BJ (cell line): ENCODE measurements at regions of chr1 and their contacts with region 1.

Region 1: DNA sequence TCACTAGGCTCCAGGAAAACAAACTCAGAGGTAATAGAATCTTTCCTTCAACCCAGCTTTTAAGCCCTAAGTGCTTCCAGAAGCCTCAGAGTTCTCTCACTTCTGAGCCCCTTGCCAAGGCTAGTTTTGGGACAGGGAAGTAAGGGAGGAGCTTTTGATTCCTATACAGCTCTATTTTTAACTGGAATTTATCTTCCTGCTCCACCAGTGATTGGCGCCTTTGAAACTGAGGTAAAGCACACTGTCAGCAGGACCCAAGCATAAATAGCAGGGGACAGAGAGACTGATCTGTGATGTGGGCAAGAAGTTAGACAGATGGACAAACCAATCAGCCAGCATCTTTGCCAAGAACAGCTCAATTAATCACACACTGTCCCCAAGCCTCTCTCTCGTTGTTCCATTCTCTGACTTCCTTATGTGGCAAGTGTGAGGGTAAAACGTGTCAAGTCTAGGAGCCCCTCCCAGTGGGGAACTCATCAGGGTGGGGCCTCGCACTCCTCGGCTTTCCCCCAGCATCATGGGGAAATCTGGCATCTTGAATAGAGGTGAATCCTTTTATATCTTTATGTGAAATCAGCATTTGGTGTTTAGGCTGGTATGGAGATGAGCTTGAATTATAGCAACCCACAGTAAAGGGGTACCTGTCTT is 40.2 kb upstream of the MPZL1 start:
- DNase-seq: no peak
- H3K4me3 ChIP-seq: no peak overlapping the region
- H3K27me3 ChIP-seq: peaks cover 3% of the 10 kb centered on the region
- CTCF ChIP-seq: no peak

Region 2: DNA sequence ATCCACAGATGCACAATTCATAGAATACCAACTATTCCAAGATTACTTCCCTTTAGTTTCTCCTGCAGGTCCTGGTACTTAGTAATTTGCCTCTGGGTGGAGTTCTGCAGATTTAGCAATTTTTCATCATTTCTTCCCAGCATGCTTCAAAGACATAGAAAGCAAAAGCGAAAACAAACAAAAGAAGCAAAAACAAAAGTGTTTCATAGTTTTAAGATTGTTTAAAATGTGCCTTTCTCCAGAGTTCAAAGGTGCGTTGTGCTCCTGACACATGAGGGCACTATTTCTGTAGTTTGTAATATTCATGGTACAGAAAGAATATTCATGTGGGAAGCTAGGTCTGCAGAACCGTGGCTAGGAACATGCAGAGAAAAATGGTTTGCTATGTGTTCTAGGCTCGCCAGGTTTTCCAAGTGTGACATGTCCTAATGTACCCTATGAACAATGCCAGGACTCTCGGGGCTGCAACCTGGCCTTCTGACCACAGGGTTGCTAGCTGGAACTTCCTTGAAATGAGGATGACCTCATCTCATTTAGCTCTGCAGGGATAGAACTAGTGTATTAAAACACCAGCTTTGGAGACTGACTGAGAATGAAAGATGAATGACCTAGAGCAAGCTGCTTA is 81.5 kb before region 1 on chr1:
- CTCF ChIA-PET with region 1: interaction called, 51 read pairs
- POLR2A ChIA-PET with region 1: no interaction called
- DNase-seq: no peak
- H3K4me3 ChIP-seq: no peak overlapping the region
- H3K27me3 ChIP-seq: no peaks in the 10 kb centered on the region
- CTCF ChIP-seq: peak; percentile 52